GM23248 (cell line): ENCODE measurements at regions of chr2 and their contacts with region 1.

Region 1: GRCh38 chr2:202870431-202871299 is 901 bp downstream of the ICA1L start:
- DNase-seq: peak; percentile 80
- H3K4me3 ChIP-seq: peak overlapping the region; percentile 83
- H3K27ac ChIP-seq: peak overlapping the region; percentile 51
- H3K4me1 ChIP-seq: no peaks in the 10 kb centered on the region
- H3K27me3 ChIP-seq: no peaks in the 10 kb centered on the region

Region 2: DNA sequence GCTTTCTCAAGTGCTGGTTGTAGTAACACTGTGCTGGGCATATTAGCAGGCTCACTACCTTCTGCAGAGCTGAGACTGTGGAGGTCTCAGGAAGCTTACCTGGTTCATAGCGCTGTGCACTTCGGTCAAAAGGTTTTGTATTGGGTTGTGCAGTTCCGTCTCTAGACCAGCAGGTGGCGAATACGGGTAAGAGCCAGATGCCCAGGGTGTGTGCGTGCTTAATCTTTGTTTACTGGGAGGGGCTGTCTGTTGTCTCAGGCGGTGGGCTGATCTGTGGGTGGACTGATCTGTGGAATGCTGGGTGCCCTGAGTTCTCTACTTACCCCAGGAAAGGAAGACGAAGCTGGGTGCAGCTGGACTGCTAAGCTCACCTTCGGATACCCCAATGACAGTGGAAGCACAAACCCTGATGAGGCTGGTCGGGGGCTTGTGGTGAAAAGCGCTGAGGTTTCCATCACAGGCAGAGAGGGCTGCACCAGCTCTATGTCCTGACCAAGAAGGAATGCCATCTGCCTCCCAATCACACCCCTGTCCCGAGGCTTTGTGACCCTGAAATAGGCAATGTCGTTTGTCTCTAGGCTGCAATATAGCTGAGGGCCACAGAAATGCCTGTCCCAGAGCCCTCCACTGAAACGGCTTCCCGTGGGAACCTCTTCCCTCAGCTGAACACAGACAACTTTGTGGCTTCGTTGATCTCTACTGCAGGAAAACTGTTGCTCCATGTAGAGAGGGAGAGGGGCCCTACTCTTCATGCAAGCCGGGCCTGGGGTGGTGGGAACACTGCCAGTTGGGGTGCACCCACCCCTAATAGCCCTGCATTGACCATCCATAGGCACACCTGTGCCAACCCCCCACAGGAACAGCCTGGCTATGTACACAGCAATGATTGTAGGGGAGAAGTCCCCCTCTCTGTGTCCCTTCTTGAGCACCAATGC is 281.8 kb before region 1 on chr2:
- in situ Hi-C with region 1: loop called (anchors 25 kb)
- DNase-seq: peak; percentile 81
- H3K4me3 ChIP-seq: peak overlapping the region; percentile 50
- H3K27ac ChIP-seq: no peak overlapping the region
- H3K4me1 ChIP-seq: no peaks in the 10 kb centered on the region
- H3K27me3 ChIP-seq: no peaks in the 10 kb centered on the region

Region 3: GRCh38 chr2:203002054-203002821 is 131.6 kb after region 1 on chr2:
- in situ Hi-C with region 1: no loop called
- DNase-seq: no peak
- H3K4me3 ChIP-seq: no peak overlapping the region
- H3K27ac ChIP-seq: no peak overlapping the region
- H3K4me1 ChIP-seq: no peaks in the 10 kb centered on the region
- H3K27me3 ChIP-seq: no peaks in the 10 kb centered on the region